ENCODE measurements at regions of chr1 and their contacts with region 1.

Region 1: GRCh38 chr1:26045722-26046248 is at the start of gene SLC30A2:
- DNase-seq: no peak
- ATAC-seq: peak; percentile 56
- H3K4me3 ChIP-seq: peak within 1 kb of the TSS; percentile 13 to 25; a peak in 3 of 4 replicates
- H3K27ac ChIP-seq: no peak within 1 kb of the TSS
- H3K4me1 ChIP-seq: no peaks in the 10 kb centered on the region; the same call in 1 of the 2 replicates
- H3K27me3 ChIP-seq: peaks cover 15% of the 10 kb centered on the region
- CTCF ChIP-seq: no peak
- total RNA-seq, gene SLC30A2: 0.23 TPM

Region 2: GRCh38 chr1:26315874-26316850 is 270.4 kb after region 1 on chr1:
- CTCF ChIA-PET with region 1: no interaction called
- POLR2A ChIA-PET with region 1: interaction called, 11 read pairs
- in situ Hi-C with region 1: no loop called
- intact Hi-C with region 1: no loop called
- DNase-seq: no peak
- ATAC-seq: no peak
- H3K4me3 ChIP-seq: no peak overlapping the region
- H3K27ac ChIP-seq: no peak overlapping the region
- H3K4me1 ChIP-seq: no peaks in the 10 kb centered on the region
- H3K27me3 ChIP-seq: no peaks in the 10 kb centered on the region
- CTCF ChIP-seq: no peak

Measured in Panc1 (cell line).